ENCODE measurements at regions of chr15 and their contacts with region 1.

Region 1: GRCh38 chr15:41774062-41774881 is at the start of gene MAPKBP1:
- DNase-seq: peak; percentile 92 to 99
- H3K4me3 ChIP-seq: peak within 1 kb of the TSS; percentile 73 to 82
- H3K27ac ChIP-seq: peak within 1 kb of the TSS; percentile 70 to 90
- H3K4me1 ChIP-seq: peaks cover 0 to 30% of the 10 kb centered on the region in 2 donors
- H3K27me3 ChIP-seq: no peaks in the 10 kb centered on the region
- CTCF ChIP-seq: peak; percentile 67 to 81 (median 74)
- total RNA-seq, gene MAPKBP1: 27.6 TPM

Region 2: GRCh38 chr15:41621200-41622193 is 152.8 kb before region 1 on chr15:
- intact Hi-C with region 1: loop called (anchors 5 kb)
- DNase-seq: peak; percentile 17 to 86
- H3K4me3 ChIP-seq: peak overlapping the region; percentile 61 to 77
- H3K27ac ChIP-seq: peak overlapping the region; percentile 83
- H3K4me1 ChIP-seq: peaks cover 0 to 8% of the 10 kb centered on the region in 2 donors
- H3K27me3 ChIP-seq: no peaks in the 10 kb centered on the region
- CTCF ChIP-seq: no peak

Region 3: DNA sequence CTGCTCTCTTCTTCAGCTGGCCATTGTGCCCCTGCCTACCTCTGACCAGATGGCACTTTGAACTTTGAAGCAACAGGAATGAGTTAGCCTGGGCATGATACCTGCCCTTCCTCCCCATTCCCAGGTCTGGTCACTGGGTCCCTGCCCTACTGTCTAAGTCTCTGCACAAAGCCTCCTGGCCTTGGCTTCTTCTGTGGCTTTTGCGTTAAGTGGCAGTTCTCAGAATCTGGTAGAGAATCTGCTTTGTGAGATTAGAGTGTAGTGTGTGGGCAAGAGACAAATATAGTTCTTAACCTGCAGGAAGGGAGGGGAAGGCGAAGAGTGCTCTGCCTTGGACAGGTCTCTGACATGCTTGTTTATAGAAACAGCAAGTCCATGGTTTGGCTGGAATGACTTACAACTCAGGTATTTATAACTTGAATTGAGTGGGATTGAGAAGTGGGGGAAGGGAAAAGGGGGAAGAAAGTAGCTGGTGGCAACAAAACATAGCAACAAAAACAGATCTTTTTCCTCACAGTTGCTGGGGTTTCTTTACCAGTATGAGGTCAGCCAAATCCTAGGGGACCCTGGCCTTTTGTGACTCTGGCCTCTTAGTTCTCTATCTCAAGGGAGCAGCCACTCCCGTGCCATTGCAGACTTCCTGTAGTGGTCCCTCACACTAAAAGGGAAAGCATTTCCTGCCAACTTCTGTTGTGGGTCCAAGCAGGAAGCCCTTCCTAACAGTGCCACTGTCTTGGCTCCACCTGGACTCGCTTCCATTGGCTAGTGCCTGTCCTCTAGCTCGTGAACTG is 16.7 kb after region 1 on chr15:
- intact Hi-C with region 1: loop called (anchors 1 kb)
- DNase-seq: peak in 1 of 2 donors; percentile 69
- H3K4me3 ChIP-seq: no peak overlapping the region
- H3K27ac ChIP-seq: peak overlapping the region; percentile 66 to 73
- H3K4me1 ChIP-seq: peaks cover 11 to 35% of the 10 kb centered on the region in 2 donors
- H3K27me3 ChIP-seq: no peaks in the 10 kb centered on the region
- CTCF ChIP-seq: no peak

Region 4: GRCh38 chr15:41827880-41828806 is 53.9 kb after region 1 on chr15 and contains the start of gene JMJD7:
- intact Hi-C with region 1: loop called (anchors 1 kb)
- DNase-seq: peak; percentile 59 to 95
- H3K4me3 ChIP-seq: peak within 1 kb of the TSS; percentile 68 to 74
- H3K27ac ChIP-seq: peak within 1 kb of the TSS; percentile 72 to 80
- H3K4me1 ChIP-seq: peaks cover 5 to 22% of the 10 kb centered on the region in 2 donors
- H3K27me3 ChIP-seq: no peaks in the 10 kb centered on the region
- CTCF ChIP-seq: peak in 1 of 3 experiments; percentile 2
- total RNA-seq, gene JMJD7: 16.4 TPM

Region 5: GRCh38 chr15:41972253-41973242 is 198.3 kb after region 1 on chr15 and contains the start of gene EHD4:
- intact Hi-C with region 1: loop called (anchors 5 kb)
- DNase-seq: peak; percentile 98 to 100
- H3K4me3 ChIP-seq: peak within 1 kb of the TSS; percentile 96 to 99
- H3K27ac ChIP-seq: peak within 1 kb of the TSS; percentile 98
- H3K4me1 ChIP-seq: peaks cover 0 to 24% of the 10 kb centered on the region in 2 donors
- H3K27me3 ChIP-seq: no peaks in the 10 kb centered on the region
- CTCF ChIP-seq: peak; percentile 42 to 56 (median 44)
- total RNA-seq, gene EHD4: 70.4 TPM